ENCODE measurements at regions of chr4 and their contacts with region 1.

Region 1: DNA sequence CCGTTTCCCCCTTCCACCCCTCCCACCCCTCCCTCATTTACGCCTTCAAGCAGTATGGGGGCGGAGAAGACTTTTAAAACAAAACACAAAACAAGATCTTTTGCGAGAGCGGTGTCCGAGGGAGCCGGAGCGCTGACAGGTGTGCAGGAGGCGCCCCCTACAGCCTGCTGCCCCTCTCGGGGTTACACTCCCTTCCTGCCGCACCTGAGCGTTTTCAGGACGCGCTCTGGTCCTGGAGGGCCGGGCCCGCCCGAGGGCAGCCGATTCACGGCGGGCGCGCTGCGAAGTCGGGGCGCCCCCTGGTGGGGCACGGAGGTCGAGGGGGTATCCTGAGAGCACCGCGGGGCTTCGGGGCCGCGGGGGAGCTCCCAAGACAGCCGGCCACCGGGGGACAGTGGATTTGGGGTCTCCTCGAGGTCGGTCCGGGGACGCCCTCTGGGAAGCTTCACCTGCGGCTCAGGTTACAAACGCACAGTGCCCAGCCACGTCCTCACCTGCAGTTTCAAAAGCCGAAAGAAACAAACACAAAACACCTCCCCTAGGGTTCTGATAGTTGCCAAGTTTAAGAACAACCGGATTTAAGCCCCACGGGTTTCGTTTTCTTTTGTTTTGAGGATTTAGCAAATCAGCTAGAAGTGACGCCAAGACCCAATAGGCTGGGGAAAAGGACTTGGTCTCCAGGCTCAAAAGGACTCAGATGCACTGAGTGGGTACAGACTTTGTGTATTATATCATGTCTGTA is 8.0 kb upstream of the NEUROG2 start:
- DNase-seq: peak; percentile 52 to 83 (median 71)
- ATAC-seq: peak; percentile 90
- H3K4me3 ChIP-seq: peak overlapping the region; percentile 69
- H3K4me3 Mint-ChIP-seq: peak overlapping the region; percentile 82 to 96 (median 90)
- H3K27ac ChIP-seq: no peak overlapping the region
- H3K27ac Mint-ChIP-seq: peak overlapping the region in 2 of 9 donors; percentile 11 to 62
- H3K4me1 ChIP-seq: peaks cover 7 to 22% of the 10 kb centered on the region in 2 donors
- H3K4me1 Mint-ChIP-seq: peaks cover 15 to 44% (median 33%) of the 10 kb centered on the region in 7 donors
- H3K27me3 ChIP-seq: peaks cover 16 to 40% of the 10 kb centered on the region in 2 donors
- H3K27me3 Mint-ChIP-seq: peaks cover 52 to 84% (median 63%) of the 10 kb centered on the region in 5 donors

Region 2: DNA sequence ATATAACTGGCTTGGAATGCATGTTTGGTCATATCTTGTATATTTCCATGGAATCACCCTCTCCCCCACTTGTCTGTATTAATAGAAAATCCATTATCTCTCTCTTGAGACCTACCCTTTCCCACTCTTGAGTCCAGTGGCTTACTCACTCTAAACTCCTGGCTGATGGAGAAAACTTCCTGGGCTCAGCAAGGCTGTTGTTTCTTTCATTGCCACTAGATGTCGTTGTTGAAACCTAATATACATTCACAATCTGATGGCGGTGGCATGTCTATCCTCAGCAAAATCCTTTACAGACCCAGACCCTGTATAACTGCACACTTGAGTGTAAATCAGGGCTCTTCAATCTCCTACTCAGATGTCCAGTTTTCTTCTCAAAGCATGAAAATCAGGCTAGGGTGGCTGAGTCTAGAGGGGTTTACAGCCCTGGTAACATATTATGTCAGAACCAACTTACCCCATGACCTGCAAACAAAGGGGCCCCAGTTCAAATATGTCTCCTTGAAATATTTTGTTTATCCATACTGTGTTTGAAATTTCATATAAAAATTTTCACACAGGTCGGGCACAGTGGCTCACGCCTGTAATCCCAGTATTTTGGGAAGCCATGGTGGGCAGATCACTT is 448.7 kb before region 1 on chr4:
- CTCF ChIA-PET with region 1: no interaction called
- POLR2A ChIA-PET with region 1: no interaction called
- intact Hi-C with region 1: loop called in 1 of 2 experiments (anchors 1 kb)
- DNase-seq: peak in 6 of 9 donors; percentile 2 to 43 (median 25)
- ATAC-seq: peak; percentile 77
- H3K4me3 ChIP-seq: no peak overlapping the region
- H3K4me3 Mint-ChIP-seq: no peak overlapping the region
- H3K27ac ChIP-seq: no peak overlapping the region
- H3K27ac Mint-ChIP-seq: no peak overlapping the region
- H3K4me1 ChIP-seq: no peaks in the 10 kb centered on the region
- H3K4me1 Mint-ChIP-seq: no peaks in the 10 kb centered on the region
- H3K27me3 ChIP-seq: no peaks in the 10 kb centered on the region
- H3K27me3 Mint-ChIP-seq: peaks cover 5 to 27% (median 10%) of the 10 kb centered on the region in 5 donors

Region 3: GRCh38 chr4:112145326-112145819 is 378.6 kb before region 1 on chr4 and contains the start of gene FAM241A:
- CTCF ChIA-PET with region 1: interaction called, 4 read pairs
- POLR2A ChIA-PET with region 1: no interaction called
- intact Hi-C with region 1: loop called in 1 of 2 experiments (anchors 1 kb)
- DNase-seq: peak; percentile 81 to 92 (median 88)
- ATAC-seq: peak; percentile 98
- H3K4me3 ChIP-seq: peak within 1 kb of the TSS; percentile 89
- H3K4me3 Mint-ChIP-seq: peak within 1 kb of the TSS; percentile 90 to 99 (median 94)
- H3K27ac ChIP-seq: peak within 1 kb of the TSS; percentile 78
- H3K27ac Mint-ChIP-seq: peak within 1 kb of the TSS; percentile 75 to 98 (median 95)
- H3K4me1 ChIP-seq: peaks cover 0 to 12% of the 10 kb centered on the region in 2 donors
- H3K4me1 Mint-ChIP-seq: peaks cover 16 to 44% (median 40%) of the 10 kb centered on the region in 7 donors
- H3K27me3 ChIP-seq: no peaks in the 10 kb centered on the region
- H3K27me3 Mint-ChIP-seq: peaks cover 0 to 5% (median 0%) of the 10 kb centered on the region in 5 donors
- total RNA-seq, gene FAM241A: 1.2 to 2.4 (median 2.0) TPM

Region 4: DNA sequence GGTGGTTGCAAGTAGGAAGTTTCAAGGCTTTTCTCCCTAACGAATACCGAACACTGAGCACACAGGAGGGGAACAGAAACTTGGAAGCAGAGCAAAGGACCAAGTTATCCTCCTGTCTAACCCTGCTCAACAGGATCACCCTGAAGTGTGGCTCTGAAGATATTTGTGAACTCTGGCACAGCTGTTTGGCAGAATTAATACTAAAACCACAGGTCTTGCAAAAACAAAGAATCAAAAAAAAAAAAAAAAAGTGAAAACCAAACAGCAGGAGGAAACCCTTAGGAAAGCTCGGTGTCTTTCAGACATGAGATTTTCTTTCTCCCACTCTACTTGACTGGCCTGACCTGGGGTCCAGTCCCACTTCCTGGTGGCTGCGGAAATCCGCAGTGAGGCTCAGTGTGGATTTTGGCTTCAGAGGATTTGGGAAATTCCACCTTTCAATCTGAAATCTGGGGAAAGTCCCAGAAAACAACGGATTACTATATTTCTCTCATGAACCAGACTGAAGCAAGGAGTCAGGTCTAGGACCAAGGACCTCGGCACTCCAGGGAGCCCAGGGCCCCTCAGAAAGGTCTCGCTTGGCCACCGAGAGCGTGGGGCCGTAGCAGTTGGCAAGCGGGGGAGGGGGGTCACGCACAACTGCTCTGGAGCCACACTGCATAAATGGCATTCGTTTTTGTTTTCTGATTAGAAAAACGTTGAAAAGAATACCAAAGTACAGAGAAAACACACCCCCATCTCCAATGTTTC is 239.1 kb before region 1 on chr4:
- CTCF ChIA-PET with region 1: no interaction called
- POLR2A ChIA-PET with region 1: interaction called, 3 read pairs
- intact Hi-C with region 1: loop called in 1 of 2 experiments (anchors 1 kb)
- DNase-seq: no peak
- ATAC-seq: no peak
- H3K4me3 ChIP-seq: peak overlapping the region; percentile 94
- H3K4me3 Mint-ChIP-seq: peak overlapping the region; percentile 87 to 97 (median 92)
- H3K27ac ChIP-seq: peak overlapping the region; percentile 81
- H3K27ac Mint-ChIP-seq: peak overlapping the region; percentile 81 to 95 (median 91)
- H3K4me1 ChIP-seq: peaks cover 31 to 54% of the 10 kb centered on the region in 2 donors
- H3K4me1 Mint-ChIP-seq: peaks cover 47 to 88% (median 83%) of the 10 kb centered on the region in 7 donors
- H3K27me3 ChIP-seq: no peaks in the 10 kb centered on the region
- H3K27me3 Mint-ChIP-seq: no peaks in the 10 kb centered on the region

Region 5: DNA sequence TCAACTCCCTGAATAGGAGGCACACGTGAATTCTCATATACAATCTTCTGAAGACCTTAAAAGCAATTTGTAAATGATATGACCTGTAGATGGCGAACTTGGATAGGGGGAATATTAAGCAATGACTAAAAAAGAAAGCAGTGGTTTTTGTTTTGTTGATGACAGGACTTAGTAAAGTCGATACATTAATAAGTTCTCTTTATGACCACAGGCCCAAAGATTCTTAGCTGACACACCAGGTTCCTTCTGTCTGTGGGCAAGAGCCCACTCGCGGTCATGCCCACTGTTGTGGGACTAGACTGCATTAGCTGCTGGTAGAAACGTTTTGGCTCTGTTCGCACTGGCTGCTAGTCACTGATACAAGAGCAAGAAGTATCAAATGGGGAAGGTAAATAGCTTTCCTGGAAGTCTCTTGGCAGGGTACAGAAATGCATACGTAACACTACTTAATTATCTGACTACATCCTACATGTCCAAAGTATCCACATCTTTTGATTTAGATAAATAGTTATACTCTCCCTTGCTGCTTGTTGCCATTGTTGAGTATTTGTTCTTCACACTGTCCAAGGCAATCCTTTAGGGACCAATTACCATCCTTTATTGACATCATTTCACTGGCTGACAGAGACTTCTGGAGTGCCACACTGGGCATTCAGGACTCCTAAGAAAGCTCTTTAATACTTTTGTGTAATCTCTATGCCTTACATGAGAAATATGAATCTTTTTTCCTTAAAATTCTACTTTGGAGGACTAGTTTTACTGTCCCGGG is 195.8 kb before region 1 on chr4:
- CTCF ChIA-PET with region 1: interaction called, 14 read pairs
- POLR2A ChIA-PET with region 1: no interaction called
- intact Hi-C with region 1: loop called (anchors 1 kb)
- DNase-seq: peak in 4 of 9 donors; percentile 21 to 27 (median 24)
- ATAC-seq: peak; percentile 60
- H3K4me3 ChIP-seq: no peak overlapping the region
- H3K4me3 Mint-ChIP-seq: no peak overlapping the region
- H3K27ac ChIP-seq: no peak overlapping the region
- H3K27ac Mint-ChIP-seq: no peak overlapping the region
- H3K4me1 ChIP-seq: no peaks in the 10 kb centered on the region
- H3K4me1 Mint-ChIP-seq: peaks cover 0 to 9% (median under 1%) of the 10 kb centered on the region in 7 donors
- H3K27me3 ChIP-seq: no peaks in the 10 kb centered on the region
- H3K27me3 Mint-ChIP-seq: no peaks in the 10 kb centered on the region

Region 6: DNA sequence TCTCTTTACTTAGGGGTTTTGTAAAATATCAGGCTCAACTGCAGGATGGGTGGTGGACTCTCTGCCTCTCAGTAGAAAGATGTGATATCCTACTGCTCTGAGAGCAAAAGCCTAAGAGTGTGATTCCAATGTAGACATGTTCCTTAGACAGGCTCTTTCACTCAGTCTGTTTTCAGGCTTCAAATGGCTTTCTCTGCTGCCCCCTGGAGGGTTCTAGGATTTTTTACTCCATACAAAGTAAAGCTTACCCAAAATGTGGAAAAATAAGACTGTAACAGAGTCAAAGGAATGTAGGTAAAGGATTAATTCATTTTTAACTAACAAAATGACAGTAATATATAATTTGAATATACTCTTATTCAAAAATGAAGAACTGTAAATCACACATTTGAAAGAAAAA is 80.7 kb after region 1 on chr4:
- CTCF ChIA-PET with region 1: no interaction called
- POLR2A ChIA-PET with region 1: no interaction called
- intact Hi-C with region 1: loop called (anchors 2 kb)
- DNase-seq: peak in 7 of 9 donors; percentile 14 to 44 (median 35)
- ATAC-seq: peak; percentile 73
- H3K4me3 ChIP-seq: no peak overlapping the region
- H3K4me3 Mint-ChIP-seq: no peak overlapping the region
- H3K27ac ChIP-seq: no peak overlapping the region
- H3K27ac Mint-ChIP-seq: no peak overlapping the region
- H3K4me1 ChIP-seq: no peaks in the 10 kb centered on the region
- H3K4me1 Mint-ChIP-seq: no peaks in the 10 kb centered on the region
- H3K27me3 ChIP-seq: no peaks in the 10 kb centered on the region
- H3K27me3 Mint-ChIP-seq: no peaks in the 10 kb centered on the region

Region 7: GRCh38 chr4:112765317-112765975 is 241.5 kb after region 1 on chr4:
- CTCF ChIA-PET with region 1: interaction called, 3 read pairs
- POLR2A ChIA-PET with region 1: no interaction called
- intact Hi-C with region 1: loop called (anchors 1 to 10 kb)
- DNase-seq: peak in 1 of 9 donors; percentile 6
- ATAC-seq: no peak
- H3K4me3 ChIP-seq: no peak overlapping the region
- H3K4me3 Mint-ChIP-seq: no peak overlapping the region
- H3K27ac ChIP-seq: no peak overlapping the region
- H3K27ac Mint-ChIP-seq: no peak overlapping the region
- H3K4me1 ChIP-seq: no peaks in the 10 kb centered on the region
- H3K4me1 Mint-ChIP-seq: peaks cover 0 to 4% (median 2%) of the 10 kb centered on the region in 7 donors
- H3K27me3 ChIP-seq: no peaks in the 10 kb centered on the region
- H3K27me3 Mint-ChIP-seq: peaks cover 3 to 9% (median 4%) of the 10 kb centered on the region in 5 donors

Region 8: DNA sequence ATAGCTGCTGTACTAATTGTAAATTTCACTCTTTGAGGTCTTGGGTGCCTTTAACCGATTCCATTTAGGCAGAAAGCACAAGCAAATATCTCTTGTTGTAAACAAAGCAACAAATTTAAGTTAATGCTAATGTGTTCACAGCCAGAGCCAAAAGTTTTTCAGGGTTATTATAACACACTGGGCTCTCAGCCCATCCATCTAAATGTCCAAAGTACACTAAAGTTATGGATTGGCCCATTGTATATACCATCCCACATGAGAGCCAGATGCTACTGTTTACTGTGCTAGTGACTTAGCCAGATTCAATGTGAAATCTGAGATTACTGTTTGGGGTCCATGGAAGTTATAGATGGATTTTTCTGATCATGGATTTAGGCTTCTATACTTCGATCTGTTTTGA is 299.7 kb after region 1 on chr4:
- CTCF ChIA-PET with region 1: no interaction called
- POLR2A ChIA-PET with region 1: no interaction called
- intact Hi-C with region 1: no loop called
- DNase-seq: no peak
- ATAC-seq: no peak
- H3K4me3 ChIP-seq: no peak overlapping the region
- H3K4me3 Mint-ChIP-seq: no peak overlapping the region
- H3K27ac ChIP-seq: no peak overlapping the region
- H3K27ac Mint-ChIP-seq: no peak overlapping the region
- H3K4me1 ChIP-seq: no peaks in the 10 kb centered on the region
- H3K4me1 Mint-ChIP-seq: peaks cover 0 to 8% (median 0%) of the 10 kb centered on the region in 7 donors
- H3K27me3 ChIP-seq: no peaks in the 10 kb centered on the region
- H3K27me3 Mint-ChIP-seq: peaks cover 3 to 34% (median 20%) of the 10 kb centered on the region in 5 donors

Region 9: GRCh38 chr4:112938461-112939058 is 414.6 kb after region 1 on chr4:
- CTCF ChIA-PET with region 1: no interaction called
- POLR2A ChIA-PET with region 1: no interaction called
- intact Hi-C with region 1: no loop called
- DNase-seq: peak in 3 of 9 donors; percentile 3 to 14 (median 4)
- ATAC-seq: no peak
- H3K4me3 ChIP-seq: no peak overlapping the region
- H3K4me3 Mint-ChIP-seq: no peak overlapping the region
- H3K27ac ChIP-seq: no peak overlapping the region
- H3K27ac Mint-ChIP-seq: no peak overlapping the region
- H3K4me1 ChIP-seq: no peaks in the 10 kb centered on the region
- H3K4me1 Mint-ChIP-seq: no peaks in the 10 kb centered on the region
- H3K27me3 ChIP-seq: no peaks in the 10 kb centered on the region
- H3K27me3 Mint-ChIP-seq: peaks cover 9 to 26% (median 23%) of the 10 kb centered on the region in 5 donors

Measured in naive thymus-derived CD4-positive, alpha-beta T cell (primary cell).